Common myeloid progenitor, CD34-positive (primary cell): ENCODE measurements at regions of chr4 and their contacts with region 1.

Region 1: GRCh38 chr4:13627606-13628301 is at the start of gene BOD1L1:
- DNase-seq: peak; percentile 90 to 91 (median 90)
- H3K4me3 ChIP-seq: peak within 1 kb of the TSS; percentile 77 to 99 (median 90)
- H3K27ac ChIP-seq: peak within 1 kb of the TSS; percentile 69 to 93
- H3K4me1 ChIP-seq: peaks cover 7 to 23% (median 15%) of the 10 kb centered on the region in 4 experiments
- H3K27me3 ChIP-seq: no peaks in the 10 kb centered on the region

Region 2: GRCh38 chr4:13498469-13498868 is 129.3 kb before region 1 on chr4:
- CTCF ChIA-PET with region 1: no interaction called
- POLR2A ChIA-PET with region 1: no interaction called
- DNase-seq: peak in 2 of 3 donors; percentile 35 to 46
- H3K4me3 ChIP-seq: no peak overlapping the region
- H3K27ac ChIP-seq: no peak overlapping the region
- H3K4me1 ChIP-seq: peaks cover 0 to 5% (median 2%) of the 10 kb centered on the region in 4 experiments
- H3K27me3 ChIP-seq: peaks cover 0 to 22% (median 4%) of the 10 kb centered on the region in 5 experiments

Region 3: DNA sequence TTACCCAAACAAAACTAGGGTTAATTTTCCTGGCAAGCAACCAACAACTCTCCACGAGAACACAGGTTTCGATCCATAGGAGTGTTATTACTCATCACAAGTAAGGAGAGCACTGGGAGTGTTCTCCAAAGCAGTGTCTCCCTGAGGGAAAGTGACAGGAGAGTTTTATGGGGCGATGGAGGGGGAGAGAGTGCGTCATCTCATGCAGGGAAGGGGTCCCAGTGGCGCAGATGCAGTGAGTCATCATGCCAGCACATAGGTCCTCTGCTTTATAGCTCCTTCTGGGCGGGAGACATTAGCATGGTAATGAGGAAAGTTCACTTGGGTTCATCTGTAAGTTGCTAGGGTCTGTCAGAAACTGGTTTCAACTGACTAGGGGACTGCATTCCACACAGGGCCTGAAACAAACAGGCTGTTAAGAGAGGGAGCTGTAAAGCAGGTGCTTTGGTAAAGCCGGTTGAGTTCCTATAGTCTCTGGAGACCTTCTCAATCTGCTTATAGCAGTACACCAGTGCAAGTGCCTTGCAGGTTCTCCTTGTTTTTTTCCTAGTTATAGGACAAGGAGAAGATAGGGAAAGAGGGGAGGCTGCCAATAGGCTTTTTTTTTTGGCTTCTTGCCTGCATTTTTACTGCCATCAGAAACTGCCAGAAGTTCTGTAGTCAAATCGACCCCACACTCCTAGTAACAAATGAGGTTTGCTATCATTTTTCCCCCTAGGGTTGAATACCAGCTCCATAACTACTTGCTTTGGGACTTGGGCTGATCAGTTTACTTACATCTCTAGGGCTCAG is 12.6 kb after region 1 on chr4:
- CTCF ChIA-PET with region 1: interaction called, 15 read pairs
- POLR2A ChIA-PET with region 1: no interaction called
- DNase-seq: peak in 1 of 3 donors; percentile 16
- H3K4me3 ChIP-seq: no peak overlapping the region
- H3K27ac ChIP-seq: no peak overlapping the region
- H3K4me1 ChIP-seq: peaks cover 0 to 4% (median 1%) of the 10 kb centered on the region in 4 experiments
- H3K27me3 ChIP-seq: peaks cover 0 to 2% (median 0%) of the 10 kb centered on the region in 5 experiments